Gastrocnemius medialis (tissue), 4 donors: ENCODE measurements at regions of chr10 and their contacts with region 1.

Region 1: GRCh38 chr10:100518761-100519241 is 860 bp downstream of the SEC31B start:
- DNase-seq: peak; percentile 55 to 71
- ATAC-seq: peak; percentile 69 to 75
- H3K4me3 ChIP-seq: peak overlapping the region; percentile 59 to 70 (median 67)
- H3K27ac ChIP-seq: peak overlapping the region; percentile 69 to 82 (median 79)
- H3K4me1 ChIP-seq: peaks cover 27 to 31% of the 10 kb centered on the region in 2 donors
- H3K27me3 ChIP-seq: no peaks in the 10 kb centered on the region
- CTCF ChIP-seq: peak; percentile 55 to 80 (median 70)
- POLR2A ChIP-seq: no peak

Region 2: GRCh38 chr10:100338434-100339036 is 180.3 kb before region 1 on chr10:
- in situ Hi-C with region 1: loop called (anchors 5 to 25 kb)
- intact Hi-C with region 1: loop called (anchors 2 kb)
- DNase-seq: peak; percentile 50 to 71
- ATAC-seq: peak; percentile 25 to 40
- H3K4me3 ChIP-seq: no peak overlapping the region
- H3K27ac ChIP-seq: no peak overlapping the region
- H3K4me1 ChIP-seq: peaks cover 20% of the 10 kb centered on the region in 2 donors
- H3K27me3 ChIP-seq: no peaks in the 10 kb centered on the region
- CTCF ChIP-seq: peak; percentile 90 to 96 (median 94)
- POLR2A ChIP-seq: no peak

Region 3: DNA sequence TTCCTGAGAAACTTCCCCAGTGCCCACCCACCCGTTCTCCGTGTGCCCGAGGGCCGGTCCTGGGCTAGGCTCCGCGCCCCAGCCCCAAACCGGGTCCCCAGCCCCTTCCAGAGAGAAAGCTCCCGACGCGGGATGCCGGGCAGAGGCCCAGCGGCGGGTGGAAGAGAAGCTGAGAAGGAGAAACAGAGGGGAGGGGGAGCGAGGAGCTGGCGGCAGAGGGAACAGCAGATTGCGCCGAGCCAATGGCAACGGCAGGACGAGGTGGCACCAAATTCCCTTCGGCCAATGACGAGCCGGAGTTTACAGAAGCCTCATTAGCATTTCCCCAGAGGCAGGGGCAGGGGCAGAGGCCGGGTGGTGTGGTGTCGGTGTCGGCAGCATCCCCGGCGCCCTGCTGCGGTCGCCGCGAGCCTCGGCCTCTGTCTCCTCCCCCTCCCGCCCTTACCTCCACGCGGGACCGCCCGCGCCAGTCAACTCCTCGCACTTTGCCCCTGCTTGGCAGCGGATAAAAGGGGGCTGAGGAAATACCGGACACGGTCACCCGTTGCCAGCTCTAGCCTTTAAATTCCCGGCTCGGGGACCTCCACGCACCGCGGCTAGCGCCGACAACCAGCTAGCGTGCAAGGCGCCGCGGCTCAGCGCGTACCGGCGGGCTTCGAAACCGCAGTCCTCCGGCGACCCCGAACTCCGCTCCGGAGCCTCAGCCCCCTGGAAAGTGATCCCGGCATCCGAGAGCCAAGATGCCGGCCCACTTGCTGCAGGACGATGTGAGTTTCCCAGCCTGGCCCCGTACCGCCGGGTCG is 171.8 kb before region 1 on chr10 and contains the start of gene SCD:
- in situ Hi-C with region 1: loop called (anchors 5 to 25 kb)
- intact Hi-C with region 1: no loop called
- DNase-seq: peak; percentile 51 to 60
- ATAC-seq: peak; percentile 8 to 35
- H3K4me3 ChIP-seq: peak within 1 kb of the TSS; percentile 60 to 85 (median 65)
- H3K27ac ChIP-seq: peak within 1 kb of the TSS in 1 of 4 donors; percentile 53
- H3K4me1 ChIP-seq: peaks cover 32 to 33% of the 10 kb centered on the region in 2 donors
- H3K27me3 ChIP-seq: peaks cover 36 to 47% (median 36%) of the 10 kb centered on the region in 3 donors
- CTCF ChIP-seq: no peak
- POLR2A ChIP-seq: peak; percentile 19 to 76
- total RNA-seq, gene SCD: 1.1 to 1.9 (median 1.6) TPM

Region 4: GRCh38 chr10:100413173-100413572 is 105.6 kb before region 1 on chr10:
- in situ Hi-C with region 1: no loop called
- intact Hi-C with region 1: no loop called
- DNase-seq: no peak
- ATAC-seq: no peak
- H3K4me3 ChIP-seq: no peak overlapping the region
- H3K27ac ChIP-seq: no peak overlapping the region
- H3K4me1 ChIP-seq: no peaks in the 10 kb centered on the region
- H3K27me3 ChIP-seq: no peaks in the 10 kb centered on the region
- CTCF ChIP-seq: no peak
- POLR2A ChIP-seq: no peak

Region 5: GRCh38 chr10:100433253-100434240 is 85.3 kb before region 1 on chr10:
- in situ Hi-C with region 1: loop called in 2 of 4 experiments (anchors 5 kb)
- intact Hi-C with region 1: loop called (anchors 1 kb)
- DNase-seq: peak; percentile 75 to 90
- ATAC-seq: peak; percentile 89 to 97
- H3K4me3 ChIP-seq: no peak overlapping the region
- H3K27ac ChIP-seq: no peak overlapping the region
- H3K4me1 ChIP-seq: peaks cover 4 to 7% of the 10 kb centered on the region in 2 donors
- H3K27me3 ChIP-seq: no peaks in the 10 kb centered on the region
- CTCF ChIP-seq: peak; percentile 98 to 99 (median 99)
- POLR2A ChIP-seq: no peak

Region 6: GRCh38 chr10:100481462-100482081 is 37.2 kb before region 1 on chr10:
- in situ Hi-C with region 1: no loop called
- intact Hi-C with region 1: loop called (anchors 1 kb)
- DNase-seq: peak; percentile 70 to 83
- ATAC-seq: peak; percentile 98
- H3K4me3 ChIP-seq: peak overlapping the region; percentile 48 to 70 (median 57)
- H3K27ac ChIP-seq: no peak overlapping the region
- H3K4me1 ChIP-seq: peaks cover 7 to 14% of the 10 kb centered on the region in 2 donors
- H3K27me3 ChIP-seq: peaks cover 3 to 23% (median 19%) of the 10 kb centered on the region in 3 donors
- CTCF ChIP-seq: no peak
- POLR2A ChIP-seq: no peak